Ascending aorta (tissue), 2 donors: ENCODE measurements at regions of chr14 and their contacts with region 1.

Region 1: GRCh38 chr14:101520621-101521472 is 40.4 kb upstream of the DIO3 start:
- DNase-seq: peak in 1 of 2 donors; percentile 74
- H3K4me3 ChIP-seq: no peak overlapping the region
- H3K27ac ChIP-seq: peak overlapping the region; percentile 45 to 62
- H3K4me1 ChIP-seq: peaks cover 0 to 2% of the 10 kb centered on the region in 2 donors
- H3K27me3 ChIP-seq: no peaks in the 10 kb centered on the region
- CTCF ChIP-seq: no peak

Region 2: GRCh38 chr14:101480747-101481530 is 39.9 kb before region 1 on chr14:
- intact Hi-C with region 1: loop called (anchors 2 kb)
- DNase-seq: peak in 1 of 2 donors; percentile 61
- H3K4me3 ChIP-seq: no peak overlapping the region
- H3K27ac ChIP-seq: no peak overlapping the region
- H3K4me1 ChIP-seq: no peaks in the 10 kb centered on the region
- H3K27me3 ChIP-seq: no peaks in the 10 kb centered on the region
- CTCF ChIP-seq: no peak